ENCODE measurements at regions of chr9 and their contacts with region 1.

Region 1: DNA sequence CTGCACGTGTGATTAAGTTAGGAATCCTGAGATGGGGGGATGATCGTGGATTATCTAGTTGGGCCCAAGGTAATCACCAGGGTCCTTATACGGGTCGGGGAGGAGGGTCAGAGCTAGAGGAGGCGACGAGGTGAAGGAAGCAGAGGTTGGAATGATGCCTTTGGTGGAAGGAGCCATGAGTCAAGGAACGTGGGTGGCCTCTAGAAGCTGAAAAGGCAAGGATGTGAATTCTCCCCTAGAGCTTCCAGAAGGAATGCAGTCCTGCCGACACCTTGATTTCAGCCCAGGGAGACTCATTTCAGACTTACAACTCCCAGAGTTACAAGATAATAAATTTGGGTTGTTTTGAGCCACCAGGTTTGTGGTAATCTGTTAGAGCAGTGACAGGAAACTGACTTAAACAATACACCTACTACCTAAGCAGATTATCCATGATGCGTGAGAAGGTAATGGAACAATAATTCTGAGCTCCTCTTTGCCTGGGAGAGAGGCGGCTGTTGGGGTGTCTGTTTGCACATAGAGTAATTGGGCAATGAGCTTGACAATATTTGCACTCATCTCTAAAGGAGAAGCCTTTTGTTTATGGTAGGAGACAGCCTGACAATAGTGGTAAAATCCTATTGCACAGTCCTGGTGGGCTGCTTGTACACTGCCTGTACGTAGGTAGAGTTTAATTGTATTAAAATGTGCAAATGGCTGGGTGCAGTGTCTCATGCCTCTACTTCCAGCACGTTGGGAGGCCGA is 129.3 kb upstream of the IER5L start:
- DNase-seq: no peak
- H3K4me3 ChIP-seq: no peak overlapping the region
- H3K27ac ChIP-seq: no peak overlapping the region
- H3K4me1 ChIP-seq: no peaks in the 10 kb centered on the region
- H3K27me3 ChIP-seq: no peaks in the 10 kb centered on the region
- CTCF ChIP-seq: no peak

Region 2: DNA sequence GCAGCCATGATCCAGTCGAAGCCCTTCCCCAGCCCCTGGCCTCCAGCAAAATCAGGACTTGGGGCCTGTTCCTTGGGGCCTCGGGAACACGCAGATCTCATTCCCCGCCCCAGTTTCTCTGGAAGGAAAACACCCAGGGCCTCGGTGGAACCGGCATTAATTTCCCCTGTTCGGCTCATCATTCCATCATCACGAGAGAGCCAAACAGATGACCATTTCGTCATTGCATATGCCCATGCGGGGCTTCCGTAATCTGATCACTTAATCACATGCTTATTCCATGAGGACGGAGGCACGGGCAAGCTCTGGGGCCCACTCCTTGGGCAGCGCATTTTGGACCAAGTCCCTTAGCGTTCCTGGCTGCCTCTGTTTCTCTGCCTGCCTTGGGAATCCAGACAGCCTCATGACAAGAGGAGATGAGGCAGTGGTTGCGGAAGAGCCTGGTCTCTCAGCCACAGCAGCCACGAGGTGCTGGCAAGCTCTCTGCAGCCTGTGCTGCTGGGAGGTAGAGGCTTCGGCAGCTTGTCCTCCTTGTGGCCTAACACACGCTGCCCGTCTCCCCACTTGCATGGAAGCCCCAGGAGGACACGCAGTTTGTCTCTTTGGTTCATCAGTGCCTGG is 64.3 kb before region 1 on chr9:
- CTCF ChIA-PET with region 1: interaction called, 10 read pairs
- POLR2A ChIA-PET with region 1: no interaction called
- intact Hi-C with region 1: no loop called
- DNase-seq: no peak
- H3K4me3 ChIP-seq: no peak overlapping the region
- H3K27ac ChIP-seq: no peak overlapping the region
- H3K4me1 ChIP-seq: no peaks in the 10 kb centered on the region
- H3K27me3 ChIP-seq: no peaks in the 10 kb centered on the region
- CTCF ChIP-seq: no peak

Region 3: GRCh38 chr9:129287619-129288305 is 19.6 kb before region 1 on chr9:
- CTCF ChIA-PET with region 1: no interaction called
- POLR2A ChIA-PET with region 1: no interaction called
- intact Hi-C with region 1: no loop called
- DNase-seq: no peak
- H3K4me3 ChIP-seq: no peak overlapping the region
- H3K27ac ChIP-seq: no peak overlapping the region
- H3K4me1 ChIP-seq: no peaks in the 10 kb centered on the region
- H3K27me3 ChIP-seq: no peaks in the 10 kb centered on the region
- CTCF ChIP-seq: no peak

Region 4: GRCh38 chr9:129323378-129323995 is 16.1 kb after region 1 on chr9:
- CTCF ChIA-PET with region 1: interaction called, 11 read pairs
- POLR2A ChIA-PET with region 1: no interaction called
- intact Hi-C with region 1: no loop called
- DNase-seq: no peak
- H3K4me3 ChIP-seq: no peak overlapping the region
- H3K27ac ChIP-seq: no peak overlapping the region
- H3K4me1 ChIP-seq: peaks cover 9% of the 10 kb centered on the region; the same call in 1 of the 2 replicates
- H3K27me3 ChIP-seq: no peaks in the 10 kb centered on the region
- CTCF ChIP-seq: no peak

Measured in PC-9 (cell line).